MCF 10A (cell line): ENCODE measurements at regions of chr11 and their contacts with region 1.

Region 1: DNA sequence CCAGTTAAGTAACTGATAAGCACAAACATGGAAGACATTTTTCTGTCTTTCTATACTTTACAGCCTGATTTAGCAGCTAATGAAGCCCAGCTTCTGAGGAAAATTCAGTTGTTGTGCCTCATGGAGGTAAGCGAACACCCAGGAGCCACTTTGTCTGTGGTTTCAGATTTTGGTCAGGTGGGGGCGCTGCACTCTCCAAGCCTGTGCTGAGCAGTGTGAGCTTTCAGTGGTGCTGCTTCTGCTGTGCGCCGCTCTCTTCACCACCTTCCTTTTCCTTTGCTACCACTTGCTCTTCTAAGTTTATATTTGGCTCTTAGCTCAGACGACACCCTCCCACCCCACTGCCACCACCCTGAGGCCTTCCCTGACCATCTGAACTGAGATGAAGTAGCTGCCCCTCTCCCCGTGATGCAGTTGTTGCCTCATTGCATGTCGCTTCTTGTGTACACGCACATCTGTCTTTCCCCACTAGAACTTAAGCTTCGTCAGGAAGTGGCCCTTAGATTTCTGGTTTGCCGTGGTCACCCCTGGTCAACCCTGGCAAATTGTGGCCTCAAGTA is 14.0 kb downstream of the PSMD13 start:
- DNase-seq: peak; percentile 57
- H3K4me3 Mint-ChIP-seq: no peak overlapping the region
- H3K27ac Mint-ChIP-seq: no peak overlapping the region
- H3K4me1 Mint-ChIP-seq: no peaks in the 10 kb centered on the region
- H3K27me3 Mint-ChIP-seq: peaks cover 6% of the 10 kb centered on the region
- CTCF ChIP-seq: peak; percentile 69

Region 2: GRCh38 chr11:236774-237767 is 13.7 kb before region 1 on chr11 and contains the start of gene PSMD13:
- CTCF ChIA-PET with region 1: interaction called, 28 read pairs
- POLR2A ChIA-PET with region 1: interaction called, 12 read pairs
- intact Hi-C with region 1: no loop called
- DNase-seq: peak; percentile 76
- H3K4me3 Mint-ChIP-seq: peak within 1 kb of the TSS; percentile 79
- H3K27ac Mint-ChIP-seq: peak within 1 kb of the TSS; percentile 96
- H3K4me1 Mint-ChIP-seq: peaks cover 24% of the 10 kb centered on the region
- H3K27me3 Mint-ChIP-seq: no peaks in the 10 kb centered on the region
- CTCF ChIP-seq: no peak
- total RNA-seq, gene PSMD13: 86.8 and 103 TPM in 2 replicates

Region 3: DNA sequence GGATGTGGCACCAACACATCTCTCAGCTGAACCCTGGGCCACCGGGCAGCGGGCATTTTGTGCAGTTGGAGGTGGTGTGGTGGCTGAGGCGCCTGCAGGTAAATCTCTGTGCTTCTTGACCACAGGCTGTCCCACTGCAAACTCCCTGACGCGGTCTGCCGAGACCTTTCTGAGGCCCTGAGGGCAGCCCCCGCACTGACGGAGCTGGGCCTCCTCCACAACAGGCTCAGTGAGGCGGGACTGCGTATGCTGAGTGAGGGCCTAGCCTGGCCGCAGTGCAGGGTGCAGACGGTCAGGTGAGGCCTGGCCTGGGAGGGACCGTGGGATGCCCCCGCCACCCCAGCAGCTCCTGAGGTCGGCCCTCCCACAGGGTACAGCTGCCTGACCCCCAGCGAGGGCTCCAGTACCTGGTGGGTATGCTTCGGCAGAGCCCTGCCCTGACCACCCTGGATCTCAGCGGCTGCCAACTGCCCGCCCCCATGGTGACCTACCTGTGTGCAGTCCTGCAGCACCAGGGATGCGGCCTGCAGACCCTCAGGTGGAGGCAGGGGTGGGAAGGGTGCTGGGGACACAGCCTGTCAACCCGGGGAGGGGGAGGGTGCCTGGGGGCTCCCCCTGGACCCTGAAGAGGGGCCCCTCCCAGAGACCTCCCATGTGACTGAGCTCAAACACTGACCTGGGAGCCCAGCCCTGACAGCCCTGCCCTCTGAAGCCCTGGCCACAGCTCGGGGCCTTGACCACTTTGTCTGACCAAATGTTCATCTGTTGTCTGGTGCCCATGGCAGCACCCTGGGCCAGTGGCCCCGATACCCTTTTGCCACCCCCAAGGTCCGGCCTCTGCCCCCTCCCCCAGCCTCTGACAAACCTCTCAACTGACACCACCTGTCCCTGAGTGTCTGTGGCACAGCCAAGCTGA is 33.5 kb after region 1 on chr11:
- CTCF ChIA-PET with region 1: interaction called, 12 read pairs
- POLR2A ChIA-PET with region 1: no interaction called
- intact Hi-C with region 1: no loop called
- DNase-seq: no peak
- H3K4me3 Mint-ChIP-seq: peak overlapping the region; percentile 43
- H3K27ac Mint-ChIP-seq: peak overlapping the region; percentile 63
- H3K4me1 Mint-ChIP-seq: peaks cover 6% of the 10 kb centered on the region
- H3K27me3 Mint-ChIP-seq: peaks cover 34% of the 10 kb centered on the region
- CTCF ChIP-seq: no peak

Region 4: DNA sequence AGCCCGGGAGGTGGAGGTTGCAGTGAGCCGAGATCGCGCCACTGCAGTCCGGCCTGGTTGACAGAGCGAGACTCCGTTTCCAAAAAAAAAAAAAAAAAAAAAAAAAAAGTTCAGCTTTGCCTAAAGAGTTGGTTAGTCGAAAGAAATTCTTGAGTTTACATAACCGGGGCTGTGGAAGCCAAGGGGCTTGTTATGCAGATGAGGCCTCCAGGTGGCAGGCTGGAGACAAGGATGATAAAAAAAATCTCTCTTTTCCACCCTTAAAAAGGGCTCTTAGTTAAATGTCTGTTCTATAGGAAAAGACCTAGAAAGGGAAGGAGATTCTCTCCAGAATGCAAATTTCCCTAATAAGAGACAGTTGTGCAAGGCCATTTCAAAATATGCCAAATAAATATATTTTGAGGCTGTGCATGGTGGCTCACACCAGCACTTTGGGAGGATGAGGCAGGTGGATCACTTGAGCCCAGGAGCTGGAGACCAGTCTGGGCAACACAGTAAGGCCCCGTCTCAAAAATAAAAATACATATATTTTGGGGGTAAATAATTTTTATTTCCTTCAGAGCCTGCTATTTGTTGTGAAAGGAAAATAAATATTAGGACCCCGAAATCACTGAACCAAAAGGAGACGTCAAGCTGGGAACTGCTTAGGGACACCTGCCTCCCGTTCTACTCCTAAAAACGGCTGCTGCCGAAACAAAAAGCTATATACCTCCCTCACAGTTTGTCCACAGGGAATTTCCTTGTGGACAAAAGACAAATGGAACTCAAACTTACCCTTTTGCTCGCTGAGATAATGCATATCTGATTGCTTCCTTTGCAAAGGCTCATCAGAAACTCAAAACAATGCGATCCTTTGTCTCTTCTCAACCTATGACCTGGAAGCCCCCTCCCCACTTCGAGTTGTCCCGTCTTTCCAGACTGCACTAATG is 54.4 kb after region 1 on chr11:
- CTCF ChIA-PET with region 1: interaction called, 8 read pairs
- POLR2A ChIA-PET with region 1: interaction called, 3 read pairs
- intact Hi-C with region 1: loop called (anchors 5 kb)
- DNase-seq: peak; percentile 74
- H3K4me3 Mint-ChIP-seq: no peak overlapping the region
- H3K27ac Mint-ChIP-seq: no peak overlapping the region
- H3K4me1 Mint-ChIP-seq: peaks cover 20% of the 10 kb centered on the region
- H3K27me3 Mint-ChIP-seq: no peaks in the 10 kb centered on the region
- CTCF ChIP-seq: peak; percentile 58

Region 5: GRCh38 chr11:363948-364761 is 113.3 kb after region 1 on chr11:
- CTCF ChIA-PET with region 1: interaction called, 15 read pairs
- POLR2A ChIA-PET with region 1: no interaction called
- intact Hi-C with region 1: loop called (anchors 2 kb)
- DNase-seq: peak; percentile 88
- H3K4me3 Mint-ChIP-seq: peak overlapping the region; percentile 35
- H3K27ac Mint-ChIP-seq: peak overlapping the region; percentile 13
- H3K4me1 Mint-ChIP-seq: peaks cover 17% of the 10 kb centered on the region
- H3K27me3 Mint-ChIP-seq: peaks cover 24% of the 10 kb centered on the region
- CTCF ChIP-seq: peak; percentile 81

Region 6: GRCh38 chr11:942823-943222 is 692.0 kb after region 1 on chr11:
- CTCF ChIA-PET with region 1: no interaction called
- POLR2A ChIA-PET with region 1: no interaction called
- intact Hi-C with region 1: no loop called
- DNase-seq: peak; percentile 66
- H3K4me3 Mint-ChIP-seq: peak overlapping the region; percentile 32
- H3K27ac Mint-ChIP-seq: peak overlapping the region; percentile 92
- H3K4me1 Mint-ChIP-seq: peaks cover 36% of the 10 kb centered on the region
- H3K27me3 Mint-ChIP-seq: no peaks in the 10 kb centered on the region
- CTCF ChIP-seq: no peak